T-cell (primary cell): ENCODE measurements at regions of chr15 and their contacts with region 1.

Region 1: GRCh38 chr15:64503197-64503596 is 42.8 kb downstream of the ZNF609 start:
- DNase-seq: peak in 1 of 35 experiments; percentile 29
- ATAC-seq: peak; percentile 39 to 59 (median 48)
- H3K4me3 ChIP-seq: peak overlapping the region; percentile 4 to 49
- H3K4me3 Mint-ChIP-seq: peak overlapping the region; percentile 47 to 60 (median 50)
- H3K27ac ChIP-seq: peak overlapping the region; percentile 66
- H3K27ac Mint-ChIP-seq: peak overlapping the region; percentile 83 to 85
- H3K4me1 ChIP-seq: peaks cover 61 to 63% of the 10 kb centered on the region in 2 experiments
- H3K4me1 Mint-ChIP-seq: peaks cover 89 to 90% (median 90%) of the 10 kb centered on the region in 3 donors
- H3K27me3 ChIP-seq: no peaks in the 10 kb centered on the region
- H3K27me3 Mint-ChIP-seq: no peaks in the 10 kb centered on the region

Region 2: GRCh38 chr15:63277038-63277892 is 1225.9 kb before region 1 on chr15 and contains the start of gene APH1B:
- CTCF ChIA-PET with region 1: interaction called in 1 of 2 experiments, 10 read pairs
- POLR2A ChIA-PET with region 1: no interaction called
- DNase-seq: peak; percentile 48 to 83 (median 67)
- ATAC-seq: peak; percentile 84 to 91 (median 86)
- H3K4me3 ChIP-seq: peak within 1 kb of the TSS; percentile 70 to 75
- H3K4me3 Mint-ChIP-seq: peak within 1 kb of the TSS; percentile 79 to 89 (median 84)
- H3K27ac ChIP-seq: peak within 1 kb of the TSS; percentile 66
- H3K27ac Mint-ChIP-seq: peak within 1 kb of the TSS; percentile 81 to 93
- H3K4me1 ChIP-seq: peaks cover 2 to 23% of the 10 kb centered on the region in 2 experiments
- H3K4me1 Mint-ChIP-seq: peaks cover 42 to 44% (median 43%) of the 10 kb centered on the region in 3 donors
- H3K27me3 ChIP-seq: no peaks in the 10 kb centered on the region
- H3K27me3 Mint-ChIP-seq: no peaks in the 10 kb centered on the region
- total RNA-seq, gene APH1B: 17.0 to 27.4 (median 20.9) TPM

Region 3: GRCh38 chr15:64344651-64345294 is 158.4 kb before region 1 on chr15:
- CTCF ChIA-PET with region 1: interaction called in 1 of 2 experiments, 13 read pairs
- POLR2A ChIA-PET with region 1: no interaction called
- DNase-seq: no peak
- ATAC-seq: no peak
- H3K4me3 ChIP-seq: no peak overlapping the region
- H3K4me3 Mint-ChIP-seq: no peak overlapping the region
- H3K27ac ChIP-seq: no peak overlapping the region
- H3K27ac Mint-ChIP-seq: no peak overlapping the region
- H3K4me1 ChIP-seq: no peaks in the 10 kb centered on the region
- H3K4me1 Mint-ChIP-seq: peaks cover 29 to 39% (median 30%) of the 10 kb centered on the region in 3 donors
- H3K27me3 ChIP-seq: no peaks in the 10 kb centered on the region
- H3K27me3 Mint-ChIP-seq: no peaks in the 10 kb centered on the region

Region 4: GRCh38 chr15:64444836-64445235 is 58.4 kb before region 1 on chr15:
- CTCF ChIA-PET with region 1: no interaction called
- POLR2A ChIA-PET with region 1: interaction called in 1 of 2 experiments, 16 read pairs
- DNase-seq: no peak
- ATAC-seq: no peak
- H3K4me3 ChIP-seq: no peak overlapping the region
- H3K4me3 Mint-ChIP-seq: peak overlapping the region in 1 of 3 donors; percentile 2
- H3K27ac ChIP-seq: no peak overlapping the region
- H3K27ac Mint-ChIP-seq: peak overlapping the region; percentile 90 to 92
- H3K4me1 ChIP-seq: peaks cover 14 to 23% of the 10 kb centered on the region in 2 experiments
- H3K4me1 Mint-ChIP-seq: peaks cover 45 to 59% (median 57%) of the 10 kb centered on the region in 3 donors
- H3K27me3 ChIP-seq: no peaks in the 10 kb centered on the region
- H3K27me3 Mint-ChIP-seq: no peaks in the 10 kb centered on the region